ENCODE measurements at regions of chr22 and their contacts with region 1.

Region 1: GRCh38 chr22:43993027-43993760 is 30.9 kb upstream of the PARVB start:
- DNase-seq: peak; percentile 45 to 66 (median 62)
- H3K4me3 ChIP-seq: no peak overlapping the region
- H3K4me3 Mint-ChIP-seq: no peak overlapping the region
- H3K27ac ChIP-seq: peak overlapping the region in 1 of 2 donors; percentile 14
- H3K27ac Mint-ChIP-seq: peak overlapping the region in 6 of 7 donors; percentile 11 to 85 (median 72)
- H3K4me1 ChIP-seq: peaks cover 13 to 14% of the 10 kb centered on the region in 2 donors
- H3K4me1 Mint-ChIP-seq: peaks cover 20% of the 10 kb centered on the region
- H3K27me3 ChIP-seq: no peaks in the 10 kb centered on the region
- H3K27me3 Mint-ChIP-seq: peaks cover 0 to 2% (median 0%) of the 10 kb centered on the region in 3 donors
- CTCF ChIP-seq: peak; percentile 97

Region 2: GRCh38 chr22:44080936-44081861 is 88.0 kb after region 1 on chr22:
- intact Hi-C with region 1: loop called (anchors 1 to 2 kb)
- DNase-seq: peak; percentile 60 to 71 (median 66)
- H3K4me3 ChIP-seq: no peak overlapping the region
- H3K4me3 Mint-ChIP-seq: no peak overlapping the region
- H3K27ac ChIP-seq: no peak overlapping the region
- H3K27ac Mint-ChIP-seq: no peak overlapping the region
- H3K4me1 ChIP-seq: no peaks in the 10 kb centered on the region
- H3K4me1 Mint-ChIP-seq: no peaks in the 10 kb centered on the region
- H3K27me3 ChIP-seq: no peaks in the 10 kb centered on the region
- H3K27me3 Mint-ChIP-seq: peaks cover 0 to 3% (median 3%) of the 10 kb centered on the region in 3 donors
- CTCF ChIP-seq: peak; percentile 92

Region 3: GRCh38 chr22:44172370-44173108 is 179.3 kb after region 1 on chr22:
- intact Hi-C with region 1: loop called in 1 of 2 experiments (anchors 10 kb)
- DNase-seq: peak; percentile 92 to 95 (median 93)
- H3K4me3 ChIP-seq: peak overlapping the region in 1 of 3 experiments; percentile 56
- H3K4me3 Mint-ChIP-seq: peak overlapping the region; percentile 64 to 68
- H3K27ac ChIP-seq: peak overlapping the region; percentile 87 to 88
- H3K27ac Mint-ChIP-seq: peak overlapping the region; percentile 96 to 99 (median 99)
- H3K4me1 ChIP-seq: peaks cover 44 to 46% of the 10 kb centered on the region in 2 donors
- H3K4me1 Mint-ChIP-seq: peaks cover 38% of the 10 kb centered on the region
- H3K27me3 ChIP-seq: no peaks in the 10 kb centered on the region
- H3K27me3 Mint-ChIP-seq: peaks cover 0 to 2% (median 2%) of the 10 kb centered on the region in 3 donors
- CTCF ChIP-seq: no peak

Region 4: GRCh38 chr22:44625981-44626687 is 632.9 kb after region 1 on chr22:
- intact Hi-C with region 1: loop called (anchors 1 to 2 kb)
- DNase-seq: peak; percentile 65 to 71 (median 67)
- H3K4me3 ChIP-seq: no peak overlapping the region
- H3K4me3 Mint-ChIP-seq: no peak overlapping the region
- H3K27ac ChIP-seq: no peak overlapping the region
- H3K27ac Mint-ChIP-seq: peak overlapping the region in 4 of 7 donors; percentile 21 to 68 (median 60)
- H3K4me1 ChIP-seq: peaks cover 2 to 4% of the 10 kb centered on the region in 2 donors
- H3K4me1 Mint-ChIP-seq: no peaks in the 10 kb centered on the region
- H3K27me3 ChIP-seq: peaks cover 0 to 5% of the 10 kb centered on the region in 2 donors
- H3K27me3 Mint-ChIP-seq: peaks cover 10 to 17% (median 12%) of the 10 kb centered on the region in 3 donors
- CTCF ChIP-seq: peak; percentile 91